Activated CD4-positive, alpha-beta T cell treated with anti-CD3 and anti-CD28 coated beads for 36 hours (primary cell): ENCODE measurements at regions of chr2 and their contacts with region 1.

Region 1: DNA sequence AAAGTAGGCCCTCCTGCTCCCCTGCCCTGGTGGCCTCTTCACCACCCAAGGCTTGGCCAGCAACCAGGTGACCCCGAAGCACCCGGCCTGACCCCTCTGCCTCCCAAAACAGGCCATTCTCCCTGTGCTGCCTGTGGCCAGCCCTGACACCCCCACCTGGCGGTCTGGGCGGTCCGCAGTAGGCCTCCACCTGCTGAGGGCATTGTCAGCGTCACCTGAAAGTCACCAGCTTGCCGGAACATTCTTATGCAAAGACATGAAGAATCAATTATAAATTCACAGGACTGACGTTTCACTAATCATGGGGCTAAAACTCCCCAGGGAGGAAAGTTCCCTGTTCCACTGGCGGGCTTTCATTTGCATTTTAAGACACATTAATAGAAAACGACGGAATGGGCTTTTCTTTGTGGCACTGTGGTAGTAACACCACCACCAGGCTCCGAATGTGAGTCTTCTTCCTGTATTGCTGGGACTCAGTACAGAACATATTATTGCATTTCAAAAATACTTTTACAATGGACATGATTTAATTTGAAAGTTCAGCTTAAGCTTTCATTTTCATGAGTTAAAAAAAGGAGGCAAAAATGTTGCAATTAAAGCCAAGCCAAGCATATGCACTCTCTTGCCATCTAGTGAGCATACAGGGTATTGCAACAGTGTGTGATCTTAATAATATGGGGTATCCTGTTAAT is 57.4 kb downstream of the ADI1 start:
- DNase-seq: peak; percentile 51
- ATAC-seq: peak; percentile 69
- H3K4me3 Mint-ChIP-seq: no peak overlapping the region
- H3K27ac Mint-ChIP-seq: peak overlapping the region; percentile 84
- H3K4me1 Mint-ChIP-seq: peaks cover 9% of the 10 kb centered on the region
- H3K27me3 Mint-ChIP-seq: no peaks in the 10 kb centered on the region

Region 2: GRCh38 chr2:3443506-3444073 is 18.4 kb before region 1 on chr2:
- CTCF ChIA-PET with region 1: interaction called, 11 read pairs
- POLR2A ChIA-PET with region 1: no interaction called
- intact Hi-C with region 1: no loop called
- DNase-seq: no peak
- ATAC-seq: no peak
- H3K4me3 Mint-ChIP-seq: no peak overlapping the region
- H3K27ac Mint-ChIP-seq: no peak overlapping the region
- H3K4me1 Mint-ChIP-seq: peaks cover 10% of the 10 kb centered on the region
- H3K27me3 Mint-ChIP-seq: no peaks in the 10 kb centered on the region

Region 3: GRCh38 chr2:3505771-3506170 is 43.8 kb after region 1 on chr2:
- CTCF ChIA-PET with region 1: no interaction called
- POLR2A ChIA-PET with region 1: no interaction called
- intact Hi-C with region 1: no loop called
- DNase-seq: no peak
- ATAC-seq: no peak
- H3K4me3 Mint-ChIP-seq: no peak overlapping the region
- H3K27ac Mint-ChIP-seq: no peak overlapping the region
- H3K4me1 Mint-ChIP-seq: no peaks in the 10 kb centered on the region
- H3K27me3 Mint-ChIP-seq: no peaks in the 10 kb centered on the region

Region 4: DNA sequence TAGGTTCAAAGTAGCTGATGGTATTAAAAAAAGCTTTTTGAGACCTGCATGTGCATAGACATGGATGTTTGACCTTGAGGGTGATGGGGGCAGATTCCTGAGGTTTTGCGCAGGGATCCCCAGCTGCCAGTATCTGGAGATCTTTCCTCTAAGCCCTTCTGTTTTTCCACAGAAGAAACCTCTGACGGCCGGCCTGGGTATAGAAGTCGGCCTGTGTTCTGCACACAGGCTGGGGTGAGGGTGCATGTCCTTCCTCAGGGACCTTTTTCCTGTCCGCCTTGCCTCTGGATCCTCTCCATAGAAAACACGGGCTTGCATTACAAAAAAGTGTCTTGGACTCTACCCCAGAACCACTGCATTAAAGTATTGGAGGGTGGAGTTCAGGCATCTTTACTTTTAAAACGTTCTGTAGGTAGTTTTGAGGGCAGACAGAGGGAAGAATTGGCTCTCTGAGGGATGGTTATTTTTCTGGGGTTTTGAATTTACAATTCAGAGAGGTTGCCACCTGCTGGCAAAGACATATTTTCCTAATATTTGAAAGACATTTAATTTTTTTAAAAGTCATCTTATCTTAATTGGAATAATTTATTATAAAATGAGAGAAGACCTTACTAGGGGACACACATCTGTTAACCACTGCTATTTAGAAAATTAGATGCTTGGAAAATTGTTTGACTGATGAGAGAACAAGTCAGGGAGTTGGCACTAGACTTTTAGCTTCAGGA is 592.0 kb after region 1 on chr2:
- CTCF ChIA-PET with region 1: no interaction called
- POLR2A ChIA-PET with region 1: no interaction called
- intact Hi-C with region 1: no loop called
- DNase-seq: no peak
- ATAC-seq: no peak
- H3K4me3 Mint-ChIP-seq: no peak overlapping the region
- H3K27ac Mint-ChIP-seq: no peak overlapping the region
- H3K4me1 Mint-ChIP-seq: peaks cover 1% of the 10 kb centered on the region
- H3K27me3 Mint-ChIP-seq: no peaks in the 10 kb centered on the region